Activated CD4-positive, alpha-beta T cell treated with anti-CD3 and anti-CD28 coated beads for 36 hours (primary cell): ENCODE measurements at regions of chr5 and their contacts with region 1.

Region 1: GRCh38 chr5:36875790-36876388 is 680 bp upstream of the NIPBL start:
- DNase-seq: peak; percentile 85
- ATAC-seq: peak; percentile 54
- H3K4me3 Mint-ChIP-seq: peak overlapping the region; percentile 89
- H3K27ac Mint-ChIP-seq: peak overlapping the region; percentile 100
- H3K4me1 Mint-ChIP-seq: peaks cover 31% of the 10 kb centered on the region
- H3K27me3 Mint-ChIP-seq: no peaks in the 10 kb centered on the region

Region 2: DNA sequence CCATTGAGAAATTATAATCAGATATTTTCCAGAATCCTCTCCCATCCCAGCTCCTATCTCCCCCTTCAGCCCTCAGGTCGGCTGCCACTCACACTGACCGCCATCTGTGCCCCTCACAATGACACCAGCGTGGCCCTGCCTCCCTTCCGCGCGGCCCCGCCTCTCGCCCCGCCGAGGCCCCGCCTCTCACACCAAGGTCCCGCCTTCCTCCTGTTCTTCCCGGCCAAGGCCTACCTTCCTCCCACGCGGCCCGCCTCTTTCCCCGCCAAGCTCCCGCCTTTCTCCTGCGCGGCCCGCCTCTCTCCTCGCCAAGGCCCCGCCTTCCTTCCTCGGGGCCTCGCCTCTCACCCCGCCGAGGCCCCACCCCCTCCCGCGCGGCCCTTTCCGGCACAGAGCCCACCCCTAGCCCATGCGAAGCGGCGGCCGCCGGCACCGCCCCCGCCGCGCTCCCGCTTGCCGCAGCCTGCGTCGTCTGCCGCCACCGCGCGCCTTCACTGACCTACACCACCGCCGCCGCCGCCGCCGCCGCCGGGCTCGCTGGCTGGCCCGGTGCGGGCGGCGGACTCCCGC is 1946.7 kb before region 1 on chr5 and contains the start of gene DNAJC21:
- CTCF ChIA-PET with region 1: no interaction called
- POLR2A ChIA-PET with region 1: no interaction called
- intact Hi-C with region 1: loop called in 1 of 2 experiments (anchors 5 kb)
- DNase-seq: peak; percentile 99
- ATAC-seq: peak; percentile 95
- H3K4me3 Mint-ChIP-seq: peak within 1 kb of the TSS; percentile 90
- H3K27ac Mint-ChIP-seq: peak within 1 kb of the TSS; percentile 93
- H3K4me1 Mint-ChIP-seq: peaks cover 43% of the 10 kb centered on the region
- H3K27me3 Mint-ChIP-seq: no peaks in the 10 kb centered on the region
- total RNA-seq, gene DNAJC21: 58.5 to 58.6 TPM

Region 3: GRCh38 chr5:35979715-35980114 is 896.2 kb before region 1 on chr5:
- CTCF ChIA-PET with region 1: no interaction called
- POLR2A ChIA-PET with region 1: no interaction called
- intact Hi-C with region 1: no loop called
- DNase-seq: no peak
- ATAC-seq: no peak
- H3K4me3 Mint-ChIP-seq: no peak overlapping the region
- H3K27ac Mint-ChIP-seq: no peak overlapping the region
- H3K4me1 Mint-ChIP-seq: no peaks in the 10 kb centered on the region
- H3K27me3 Mint-ChIP-seq: no peaks in the 10 kb centered on the region

Region 4: GRCh38 chr5:36521838-36522745 is 353.8 kb before region 1 on chr5:
- CTCF ChIA-PET with region 1: no interaction called
- POLR2A ChIA-PET with region 1: no interaction called
- intact Hi-C with region 1: no loop called
- DNase-seq: no peak
- ATAC-seq: no peak
- H3K4me3 Mint-ChIP-seq: no peak overlapping the region
- H3K27ac Mint-ChIP-seq: no peak overlapping the region
- H3K4me1 Mint-ChIP-seq: no peaks in the 10 kb centered on the region
- H3K27me3 Mint-ChIP-seq: peaks cover 3% of the 10 kb centered on the region

Region 5: DNA sequence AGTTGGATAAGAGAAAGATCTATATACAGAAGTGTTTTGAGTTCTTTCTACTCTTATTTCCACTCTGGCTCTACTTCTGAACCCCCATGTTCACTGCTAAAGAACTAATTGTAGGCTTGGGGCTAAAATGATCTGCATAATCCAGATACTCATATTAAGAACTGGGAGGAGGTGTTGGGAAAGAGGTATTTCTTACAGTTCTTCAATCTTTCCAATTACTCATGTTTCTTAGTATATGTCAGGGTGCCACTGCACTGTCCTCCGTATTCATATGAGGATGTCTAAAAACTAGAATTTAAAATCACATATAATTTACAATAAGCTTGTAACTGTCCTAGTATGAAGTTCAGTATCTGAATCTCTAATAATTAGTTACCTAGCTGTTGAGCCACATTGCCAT is 13.4 kb after region 1 on chr5:
- CTCF ChIA-PET with region 1: interaction called, 6 read pairs
- POLR2A ChIA-PET with region 1: interaction called, 3 read pairs
- intact Hi-C with region 1: loop called (anchors 1 kb)
- DNase-seq: no peak
- ATAC-seq: peak; percentile 97
- H3K4me3 Mint-ChIP-seq: no peak overlapping the region
- H3K27ac Mint-ChIP-seq: peak overlapping the region; percentile 67
- H3K4me1 Mint-ChIP-seq: peaks cover 67% of the 10 kb centered on the region
- H3K27me3 Mint-ChIP-seq: no peaks in the 10 kb centered on the region

Region 6: DNA sequence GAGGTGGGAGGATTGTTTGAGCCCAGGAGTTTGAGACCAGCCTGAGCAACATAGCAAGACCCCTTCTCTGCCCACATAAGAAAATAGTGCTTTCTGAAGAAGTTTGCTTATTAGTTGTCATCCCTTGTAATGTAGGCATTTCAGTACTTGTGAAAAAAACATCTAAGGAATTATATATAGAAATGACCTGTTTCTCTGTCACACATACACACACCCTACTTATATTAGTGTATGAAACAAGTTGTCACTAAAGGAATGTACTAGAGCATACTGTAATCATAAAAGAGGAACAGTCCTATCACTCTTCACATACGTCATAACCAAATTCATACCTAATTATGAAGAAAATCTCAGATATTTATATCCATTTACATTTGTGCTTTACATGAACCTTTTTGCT is 122.7 kb after region 1 on chr5:
- CTCF ChIA-PET with region 1: no interaction called
- POLR2A ChIA-PET with region 1: no interaction called
- intact Hi-C with region 1: loop called in 1 of 2 experiments (anchors 5 kb)
- DNase-seq: no peak
- ATAC-seq: peak; percentile 87
- H3K4me3 Mint-ChIP-seq: no peak overlapping the region
- H3K27ac Mint-ChIP-seq: no peak overlapping the region
- H3K4me1 Mint-ChIP-seq: peaks cover 12% of the 10 kb centered on the region
- H3K27me3 Mint-ChIP-seq: no peaks in the 10 kb centered on the region

Region 7: DNA sequence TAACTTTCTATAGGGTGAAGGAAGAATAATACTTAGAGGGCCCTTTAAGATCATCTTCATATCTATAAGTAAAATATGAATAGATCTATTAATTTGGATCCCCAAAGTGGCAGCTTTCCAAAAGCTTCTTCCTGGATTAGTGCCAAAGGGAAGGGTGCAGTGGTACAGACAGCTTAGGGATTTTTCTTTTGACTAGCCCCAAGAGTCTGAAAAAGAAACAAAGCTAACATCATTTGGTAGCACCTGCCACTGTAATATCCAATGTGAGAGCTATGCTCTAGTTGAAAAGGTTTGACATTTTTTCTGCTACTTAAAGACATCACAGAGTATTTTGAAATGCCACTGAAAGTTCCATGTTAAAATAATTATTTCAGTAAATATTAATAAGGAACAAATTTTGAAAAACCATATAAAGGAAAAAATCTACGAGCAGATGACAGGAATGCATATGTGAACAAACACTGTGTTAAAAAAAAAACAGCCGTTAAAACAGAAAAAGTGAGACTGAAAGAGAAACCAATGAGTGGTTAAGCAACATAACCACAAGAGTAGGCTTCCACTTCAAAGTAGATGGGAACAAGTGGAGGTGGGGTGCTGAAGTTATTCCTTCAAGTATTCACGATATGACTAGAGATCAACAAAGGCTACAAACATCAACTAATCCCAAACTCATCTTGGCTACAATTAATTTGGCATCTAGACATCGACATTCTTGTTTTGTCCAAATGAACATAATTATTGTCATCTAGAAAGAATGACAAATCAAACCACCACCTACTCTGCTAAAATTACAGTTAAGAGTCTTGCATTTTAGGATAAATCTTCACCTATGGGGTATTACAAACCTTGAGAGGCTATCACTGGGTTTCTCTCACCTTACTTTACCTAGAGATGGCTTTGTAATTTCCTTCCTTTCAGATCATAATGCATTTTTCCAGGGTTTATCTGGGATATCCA is 235.8 kb after region 1 on chr5:
- CTCF ChIA-PET with region 1: no interaction called
- POLR2A ChIA-PET with region 1: no interaction called
- intact Hi-C with region 1: loop called (anchors 1 to 5 kb)
- DNase-seq: peak; percentile 23
- ATAC-seq: peak; percentile 75
- H3K4me3 Mint-ChIP-seq: peak overlapping the region; percentile 24
- H3K27ac Mint-ChIP-seq: peak overlapping the region; percentile 65
- H3K4me1 Mint-ChIP-seq: peaks cover 35% of the 10 kb centered on the region
- H3K27me3 Mint-ChIP-seq: peaks cover 11% of the 10 kb centered on the region

Region 8: DNA sequence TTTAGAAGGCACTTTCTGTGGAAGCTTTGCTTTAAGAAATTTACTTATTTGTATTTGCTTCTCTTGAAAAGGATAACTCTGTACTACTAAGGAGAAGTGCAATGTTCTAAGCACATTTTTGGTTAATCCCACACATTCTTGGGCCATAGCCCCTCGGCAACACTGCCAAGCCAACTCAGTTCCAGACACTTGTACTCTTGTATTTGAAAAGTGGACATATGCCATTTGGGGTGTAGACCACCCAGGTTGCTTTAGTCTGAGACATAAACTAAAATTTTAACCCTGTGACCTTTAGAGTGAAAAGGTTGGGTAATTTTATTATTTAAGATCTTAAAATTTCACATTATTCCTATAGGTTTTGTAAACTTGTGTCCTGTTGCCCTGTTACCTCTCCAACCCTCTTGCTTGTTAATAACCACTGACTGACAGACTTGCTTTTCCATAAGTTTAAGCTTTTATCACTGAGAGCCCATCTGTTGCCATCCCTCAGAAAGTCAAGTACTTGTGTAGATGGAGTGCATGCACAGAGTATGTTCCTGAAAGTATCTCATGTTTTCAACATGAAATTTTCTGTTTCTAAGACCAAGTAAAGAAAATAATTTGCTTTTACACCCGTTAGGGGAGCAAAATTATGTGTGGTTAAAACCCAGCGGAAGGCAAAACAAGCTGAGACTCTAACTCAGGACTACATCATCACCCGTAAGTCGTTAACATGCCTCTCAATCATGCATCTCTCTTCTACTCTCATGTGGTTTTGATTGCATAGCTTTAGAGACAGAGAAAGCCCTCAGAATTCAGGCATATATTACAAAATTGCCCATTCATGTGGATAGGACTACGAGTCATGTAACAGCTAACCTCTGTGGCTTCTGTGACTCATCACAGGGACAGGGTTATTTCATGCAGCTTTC is 846.6 kb after region 1 on chr5:
- CTCF ChIA-PET with region 1: no interaction called
- POLR2A ChIA-PET with region 1: no interaction called
- intact Hi-C with region 1: loop called in 1 of 2 experiments (anchors 5 kb)
- DNase-seq: peak; percentile 71
- ATAC-seq: peak; percentile 95
- H3K4me3 Mint-ChIP-seq: no peak overlapping the region
- H3K27ac Mint-ChIP-seq: peak overlapping the region; percentile 48
- H3K4me1 Mint-ChIP-seq: peaks cover 34% of the 10 kb centered on the region
- H3K27me3 Mint-ChIP-seq: no peaks in the 10 kb centered on the region

Region 9: GRCh38 chr5:37837414-37838032 is 961.6 kb after region 1 on chr5:
- CTCF ChIA-PET with region 1: no interaction called
- POLR2A ChIA-PET with region 1: no interaction called
- intact Hi-C with region 1: no loop called
- DNase-seq: peak; percentile 90
- ATAC-seq: peak; percentile 69
- H3K4me3 Mint-ChIP-seq: peak overlapping the region; percentile 55
- H3K27ac Mint-ChIP-seq: no peak overlapping the region
- H3K4me1 Mint-ChIP-seq: peaks cover 28% of the 10 kb centered on the region
- H3K27me3 Mint-ChIP-seq: peaks cover 77% of the 10 kb centered on the region